Left ventricle myocardium inferior (tissue), 1 donor: ENCODE measurements at regions of chr3 and their contacts with region 1.

Region 1: GRCh38 chr3:196518966-196519717 is 4.0 kb upstream of the SMCO1 start:
- DNase-seq: peak; percentile 49
- H3K4me3 ChIP-seq: no peak overlapping the region
- H3K27ac ChIP-seq: peak overlapping the region; percentile 39
- H3K4me1 ChIP-seq: peaks cover 11% of the 10 kb centered on the region
- H3K27me3 ChIP-seq: no peaks in the 10 kb centered on the region
- CTCF ChIP-seq: peak; percentile 73

Region 2: DNA sequence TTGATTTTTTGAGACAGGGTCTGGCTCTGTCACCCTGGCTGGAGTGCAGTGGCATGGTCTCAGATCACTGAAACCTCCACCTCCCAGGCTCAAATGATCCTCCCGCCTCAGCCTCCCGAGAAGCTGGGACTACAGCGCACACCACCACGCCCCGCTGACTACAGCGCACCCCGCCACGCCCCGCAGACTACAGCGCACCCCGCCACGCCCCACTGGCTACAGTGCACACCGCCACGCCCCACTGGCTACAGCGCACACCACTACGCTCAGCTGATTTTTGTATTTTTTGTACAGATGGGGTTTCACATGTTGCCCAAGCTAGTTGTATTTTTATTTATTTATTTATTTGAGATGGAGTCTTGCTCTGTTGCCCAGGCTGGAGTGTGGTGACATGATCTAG is 267.2 kb before region 1 on chr3:
- intact Hi-C with region 1: loop called (anchors 10 kb)
- DNase-seq: no peak
- H3K4me3 ChIP-seq: no peak overlapping the region
- H3K27ac ChIP-seq: no peak overlapping the region
- H3K4me1 ChIP-seq: peaks cover 7% of the 10 kb centered on the region
- H3K27me3 ChIP-seq: no peaks in the 10 kb centered on the region
- CTCF ChIP-seq: no peak

Region 3: GRCh38 chr3:196684548-196685407 is 165.6 kb after region 1 on chr3:
- intact Hi-C with region 1: no loop called
- DNase-seq: peak; percentile 41
- H3K4me3 ChIP-seq: peak overlapping the region; percentile 6
- H3K27ac ChIP-seq: peak overlapping the region; percentile 24
- H3K4me1 ChIP-seq: peaks cover 9% of the 10 kb centered on the region
- H3K27me3 ChIP-seq: peaks cover 3% of the 10 kb centered on the region
- CTCF ChIP-seq: peak; percentile 94